MCF 10A (cell line): ENCODE measurements at regions of chr3 and their contacts with region 1.

Region 1: GRCh38 chr3:30751610-30752299 is 142.7 kb downstream of the GADL1 start:
- DNase-seq: peak; percentile 52
- H3K4me3 Mint-ChIP-seq: no peak overlapping the region
- H3K27ac Mint-ChIP-seq: no peak overlapping the region
- H3K4me1 Mint-ChIP-seq: peaks cover 6% of the 10 kb centered on the region
- H3K27me3 Mint-ChIP-seq: no peaks in the 10 kb centered on the region
- CTCF ChIP-seq: no peak

Region 2: GRCh38 chr3:30012941-30013543 is 738.7 kb before region 1 on chr3:
- CTCF ChIA-PET with region 1: no interaction called
- POLR2A ChIA-PET with region 1: no interaction called
- intact Hi-C with region 1: loop called (anchors 1 kb)
- DNase-seq: peak; percentile 82
- H3K4me3 Mint-ChIP-seq: no peak overlapping the region
- H3K27ac Mint-ChIP-seq: no peak overlapping the region
- H3K4me1 Mint-ChIP-seq: no peaks in the 10 kb centered on the region
- H3K27me3 Mint-ChIP-seq: no peaks in the 10 kb centered on the region
- CTCF ChIP-seq: peak; percentile 53

Region 3: GRCh38 chr3:30042274-30042859 is 709.4 kb before region 1 on chr3:
- CTCF ChIA-PET with region 1: interaction called, 9 read pairs
- POLR2A ChIA-PET with region 1: no interaction called
- intact Hi-C with region 1: loop called (anchors 1 kb)
- DNase-seq: peak; percentile 80
- H3K4me3 Mint-ChIP-seq: no peak overlapping the region
- H3K27ac Mint-ChIP-seq: no peak overlapping the region
- H3K4me1 Mint-ChIP-seq: no peaks in the 10 kb centered on the region
- H3K27me3 Mint-ChIP-seq: no peaks in the 10 kb centered on the region
- CTCF ChIP-seq: peak; percentile 86

Region 4: GRCh38 chr3:30112902-30113484 is 638.8 kb before region 1 on chr3:
- CTCF ChIA-PET with region 1: interaction called, 4 read pairs
- POLR2A ChIA-PET with region 1: no interaction called
- intact Hi-C with region 1: loop called (anchors 1 kb)
- DNase-seq: peak; percentile 46
- H3K4me3 Mint-ChIP-seq: no peak overlapping the region
- H3K27ac Mint-ChIP-seq: no peak overlapping the region
- H3K4me1 Mint-ChIP-seq: peaks cover 16% of the 10 kb centered on the region
- H3K27me3 Mint-ChIP-seq: no peaks in the 10 kb centered on the region
- CTCF ChIP-seq: peak; percentile 66